ENCODE measurements at regions of chr6 and their contacts with region 1.

Region 1: DNA sequence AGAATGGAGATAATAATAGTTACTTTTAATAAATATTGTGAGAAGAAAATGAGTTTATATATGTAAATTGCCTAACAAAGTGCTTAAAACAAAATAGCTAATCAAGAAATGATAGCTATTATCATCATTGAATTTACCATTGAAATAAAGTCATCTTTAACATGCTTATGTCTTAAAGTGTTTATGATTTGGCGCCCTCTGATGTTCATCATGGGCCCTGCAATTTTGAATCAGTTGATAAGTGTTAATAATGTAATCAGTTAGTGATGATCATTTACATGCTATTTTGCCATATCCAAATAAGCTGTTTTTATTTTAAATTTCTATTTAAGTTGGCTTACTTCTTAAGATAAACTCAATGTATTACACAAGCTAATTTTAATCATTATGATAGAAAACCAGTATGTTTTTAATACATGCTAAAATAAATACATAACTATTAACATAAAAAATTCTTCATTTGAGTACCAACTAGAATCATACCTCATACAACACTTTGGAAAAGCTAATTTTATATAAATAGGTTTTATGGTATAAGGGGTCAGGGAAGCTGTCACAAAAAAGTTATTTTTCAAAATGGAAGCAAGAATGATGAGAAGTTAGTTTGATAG is 39.2 kb upstream of the TPD52L1 start:
- DNase-seq: peak; percentile 34
- CTCF ChIP-seq: peak; percentile 46

Region 2: GRCh38 chr6:124870611-124871459 is 243.5 kb before region 1 on chr6:
- in situ Hi-C with region 1: loop called (anchors 10 kb)
- DNase-seq: no peak
- CTCF ChIP-seq: peak; percentile 15

Region 3: GRCh38 chr6:125961117-125961516 is 846.8 kb after region 1 on chr6:
- in situ Hi-C with region 1: no loop called
- DNase-seq: no peak
- CTCF ChIP-seq: no peak

Measured in GM13976 (cell line).